CD4-positive, alpha-beta memory T cell (primary cell): ENCODE measurements at regions of chr19 and their contacts with region 1.

Region 1: DNA sequence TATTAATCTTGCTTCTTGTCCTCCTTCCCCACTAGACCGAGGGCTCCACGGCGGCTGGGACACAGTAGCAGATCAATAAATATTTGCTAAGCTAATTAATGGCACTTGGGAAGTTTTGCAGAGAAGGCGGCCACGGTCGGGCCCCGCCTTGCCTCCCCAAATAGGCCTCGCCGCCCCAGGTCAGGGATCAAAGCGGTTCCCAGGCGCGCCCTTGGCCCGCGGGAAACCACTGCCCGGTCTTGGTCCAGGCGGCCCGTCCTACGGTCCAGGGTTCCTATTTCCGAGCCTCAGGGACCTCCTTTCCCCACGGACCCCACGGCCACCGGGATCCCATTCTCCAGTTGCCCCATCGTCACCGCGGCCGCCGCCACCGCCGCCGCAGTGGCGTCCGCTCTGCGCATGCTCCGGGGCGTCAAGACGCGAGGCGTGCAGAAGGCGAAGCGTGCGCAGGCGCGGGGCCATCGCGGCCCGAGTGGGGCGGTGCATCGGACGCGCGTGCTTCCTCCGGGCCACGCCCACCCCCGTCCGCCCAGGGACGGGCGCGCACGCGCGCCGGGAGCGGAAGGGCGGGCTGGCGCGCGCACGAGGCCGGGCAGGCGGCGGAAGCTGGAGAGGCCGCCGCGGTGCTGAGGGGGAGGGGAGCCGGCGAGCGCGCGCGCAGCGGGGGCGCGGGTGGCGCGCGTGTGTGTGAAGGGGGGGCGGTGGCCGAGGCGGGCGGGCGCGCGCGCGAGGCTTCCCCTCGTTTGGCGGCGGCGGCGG is at the start of gene SMARCA4:
- DNase-seq: peak; percentile 96 to 99 (median 99)
- H3K4me3 ChIP-seq: peak within 1 kb of the TSS; percentile 14 to 84
- H3K4me3 Mint-ChIP-seq: peak within 1 kb of the TSS; percentile 89 to 94 (median 92)
- H3K27ac ChIP-seq: peak within 1 kb of the TSS; percentile 79
- H3K27ac Mint-ChIP-seq: peak within 1 kb of the TSS; percentile 91 to 96 (median 93)
- H3K4me1 ChIP-seq: peaks cover 31% of the 10 kb centered on the region
- H3K4me1 Mint-ChIP-seq: peaks cover 21 to 48% (median 35%) of the 10 kb centered on the region in 4 donors
- H3K27me3 ChIP-seq: no peaks in the 10 kb centered on the region
- H3K27me3 Mint-ChIP-seq: no peaks in the 10 kb centered on the region
- total RNA-seq, gene SMARCA4: 94.2 to 118 TPM

Region 2: DNA sequence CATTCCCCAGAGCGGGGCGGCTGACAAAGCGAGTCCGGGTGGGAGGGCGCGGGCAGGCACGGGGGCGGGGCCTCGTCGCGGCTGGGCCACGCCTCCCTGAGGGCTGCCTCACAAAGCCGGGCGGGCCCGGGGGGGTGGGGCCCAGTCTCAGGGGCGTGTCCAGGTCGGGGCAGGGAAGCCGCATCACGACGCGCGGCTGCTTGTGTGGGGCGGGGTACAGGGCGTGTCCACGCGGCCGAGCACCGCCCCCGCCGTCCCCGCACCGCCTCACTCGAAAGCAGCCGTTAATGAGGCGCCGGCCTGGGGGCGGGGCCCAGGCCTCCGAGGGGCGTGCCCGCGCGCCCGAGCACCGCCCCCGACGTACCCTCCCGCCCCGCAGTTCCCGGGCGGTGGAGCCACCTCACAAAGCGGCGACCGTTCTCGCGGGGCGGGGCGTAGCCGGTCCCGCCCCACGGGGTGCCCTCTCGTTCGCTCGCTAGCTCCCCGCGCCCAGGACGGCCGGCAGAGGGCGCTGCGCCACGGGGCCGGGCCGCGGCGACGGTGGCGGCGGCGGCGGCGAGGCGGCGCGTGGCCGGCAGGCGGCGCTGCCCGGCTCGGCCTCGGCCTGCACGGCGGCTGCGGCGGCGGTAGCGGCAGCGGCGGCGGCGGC is 89.4 kb before region 1 on chr19 and contains the start of gene CARM1:
- CTCF ChIA-PET with region 1: no interaction called
- POLR2A ChIA-PET with region 1: no interaction called
- intact Hi-C with region 1: loop called (anchors 1 kb)
- DNase-seq: peak; percentile 99 to 100 (median 99)
- H3K4me3 ChIP-seq: peak within 1 kb of the TSS; percentile 47 to 55
- H3K4me3 Mint-ChIP-seq: peak within 1 kb of the TSS; percentile 81 to 94 (median 86)
- H3K27ac ChIP-seq: peak within 1 kb of the TSS; percentile 55
- H3K27ac Mint-ChIP-seq: peak within 1 kb of the TSS; percentile 76 to 96 (median 92)
- H3K4me1 ChIP-seq: peaks cover 20% of the 10 kb centered on the region
- H3K4me1 Mint-ChIP-seq: peaks cover 8 to 24% (median 16%) of the 10 kb centered on the region in 4 donors
- H3K27me3 ChIP-seq: no peaks in the 10 kb centered on the region
- H3K27me3 Mint-ChIP-seq: no peaks in the 10 kb centered on the region
- total RNA-seq, gene CARM1: 25.2 to 26.5 TPM

Region 3: GRCh38 chr19:10918359-10918758 is 42.1 kb before region 1 on chr19:
- CTCF ChIA-PET with region 1: no interaction called
- POLR2A ChIA-PET with region 1: no interaction called
- intact Hi-C with region 1: no loop called
- DNase-seq: no peak
- H3K4me3 ChIP-seq: no peak overlapping the region
- H3K4me3 Mint-ChIP-seq: no peak overlapping the region
- H3K27ac ChIP-seq: no peak overlapping the region
- H3K27ac Mint-ChIP-seq: peak overlapping the region in 1 of 7 donors; percentile 29
- H3K4me1 ChIP-seq: no peaks in the 10 kb centered on the region
- H3K4me1 Mint-ChIP-seq: no peaks in the 10 kb centered on the region
- H3K27me3 ChIP-seq: no peaks in the 10 kb centered on the region
- H3K27me3 Mint-ChIP-seq: no peaks in the 10 kb centered on the region

Region 4: DNA sequence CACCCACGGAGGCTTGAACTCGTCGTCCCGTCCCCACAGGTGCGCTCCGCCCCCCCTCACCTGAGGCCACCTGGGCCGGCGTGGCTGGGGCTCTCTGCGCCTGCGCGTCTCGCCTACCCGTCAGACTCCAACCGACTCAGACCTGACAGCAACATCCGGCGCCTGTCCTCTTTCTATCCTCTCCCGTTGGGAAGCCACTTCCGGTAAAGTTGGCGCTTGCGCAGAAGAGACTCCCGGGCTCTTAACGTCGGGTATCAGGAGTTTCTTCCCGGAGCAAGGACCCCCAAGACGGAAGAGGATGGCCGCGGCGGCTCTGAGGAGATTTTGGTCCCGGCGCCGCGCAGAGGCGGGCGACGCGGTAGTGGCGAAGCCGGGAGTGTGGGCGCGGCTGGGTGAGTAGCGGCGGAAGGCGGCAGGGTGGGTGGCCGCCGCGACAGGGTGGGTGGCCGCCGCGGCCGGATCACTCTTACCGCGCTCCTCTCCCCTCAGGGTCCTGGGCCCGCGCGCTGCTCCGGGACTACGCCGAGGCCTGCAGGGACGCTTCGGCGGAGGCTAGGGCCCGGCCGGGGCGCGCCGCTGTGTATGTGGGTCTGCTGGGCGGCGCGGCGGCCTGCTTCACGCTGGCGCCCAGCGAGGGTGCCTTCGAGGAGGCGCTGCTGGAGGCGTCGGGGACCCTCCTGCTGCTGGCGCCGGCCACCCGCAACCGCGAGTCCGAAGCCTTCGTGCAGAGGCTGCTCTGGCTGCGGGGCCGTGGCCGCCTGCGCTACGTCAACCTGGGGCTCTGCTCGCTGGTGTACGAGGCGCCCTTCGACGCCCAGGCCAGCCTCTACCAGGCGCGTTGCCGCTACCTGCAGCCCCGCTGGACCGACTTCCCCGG is 31.7 kb before region 1 on chr19 and contains the starts of genes TIMM29 and YIPF2:
- CTCF ChIA-PET with region 1: no interaction called
- POLR2A ChIA-PET with region 1: interaction called, 4 read pairs
- intact Hi-C with region 1: loop called (anchors 5 kb)
- DNase-seq: peak; percentile 89 to 95 (median 90)
- H3K4me3 ChIP-seq: peak within 1 kb of the TSS; percentile 52 to 80
- H3K4me3 Mint-ChIP-seq: peak within 1 kb of the TSS; percentile 88 to 96 (median 90)
- H3K27ac ChIP-seq: peak within 1 kb of the TSS; percentile 57
- H3K27ac Mint-ChIP-seq: peak within 1 kb of the TSS; percentile 88 to 95 (median 90)
- H3K4me1 ChIP-seq: peaks cover 28% of the 10 kb centered on the region
- H3K4me1 Mint-ChIP-seq: peaks cover 8 to 38% (median 19%) of the 10 kb centered on the region in 4 donors
- H3K27me3 ChIP-seq: no peaks in the 10 kb centered on the region
- H3K27me3 Mint-ChIP-seq: no peaks in the 10 kb centered on the region
- total RNA-seq, gene TIMM29: 39.6 to 40.9 TPM
- total RNA-seq, gene YIPF2: 29.6 TPM

Region 5: GRCh38 chr19:11018179-11018578 is 57.7 kb after region 1 on chr19:
- CTCF ChIA-PET with region 1: no interaction called
- POLR2A ChIA-PET with region 1: no interaction called
- intact Hi-C with region 1: no loop called
- DNase-seq: no peak
- H3K4me3 ChIP-seq: no peak overlapping the region
- H3K4me3 Mint-ChIP-seq: no peak overlapping the region
- H3K27ac ChIP-seq: no peak overlapping the region
- H3K27ac Mint-ChIP-seq: no peak overlapping the region
- H3K4me1 ChIP-seq: no peaks in the 10 kb centered on the region
- H3K4me1 Mint-ChIP-seq: no peaks in the 10 kb centered on the region
- H3K27me3 ChIP-seq: no peaks in the 10 kb centered on the region
- H3K27me3 Mint-ChIP-seq: no peaks in the 10 kb centered on the region

Region 6: DNA sequence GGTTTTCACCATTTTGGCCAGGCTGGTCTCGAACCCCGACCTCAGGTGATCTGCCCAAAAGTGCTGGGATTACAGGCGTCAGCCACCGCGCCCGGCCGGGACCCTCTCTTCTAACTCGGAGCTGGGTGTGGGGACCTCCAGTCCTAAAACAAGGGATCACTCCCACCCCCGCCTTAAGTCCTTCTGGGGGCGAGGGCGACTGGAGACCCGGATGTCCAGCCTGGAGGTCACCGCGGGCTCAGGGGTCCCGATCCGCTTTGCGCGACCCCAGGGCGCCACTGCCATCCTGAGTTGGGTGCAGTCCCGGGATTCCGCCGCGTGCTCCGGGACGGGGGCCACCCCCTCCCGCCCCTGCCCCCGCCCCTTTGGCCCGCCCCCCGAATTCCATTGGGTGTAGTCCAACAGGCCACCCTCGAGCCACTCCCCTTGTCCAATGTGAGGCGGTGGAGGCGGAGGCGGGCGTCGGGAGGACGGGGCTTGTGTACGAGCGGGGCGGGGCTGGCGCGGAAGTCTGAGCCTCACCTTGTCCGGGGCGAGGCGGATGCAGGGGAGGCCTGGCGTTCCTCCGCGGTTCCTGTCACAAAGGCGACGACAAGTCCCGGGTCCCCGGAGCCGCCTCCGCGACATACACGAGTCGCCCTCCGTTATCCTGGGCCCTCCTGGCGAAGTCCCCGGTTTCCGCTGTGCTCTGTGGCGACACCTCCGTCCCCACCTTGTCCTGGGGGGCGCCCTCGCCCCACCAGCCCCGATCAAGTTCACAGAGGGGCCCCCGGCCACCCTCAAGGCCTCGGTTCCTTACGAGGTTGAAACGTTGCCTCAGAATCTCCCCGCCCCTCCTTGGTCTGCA is 129.8 kb after region 1 on chr19:
- CTCF ChIA-PET with region 1: no interaction called
- POLR2A ChIA-PET with region 1: interaction called, 10 read pairs
- intact Hi-C with region 1: loop called (anchors 2 kb)
- DNase-seq: peak; percentile 94 to 98 (median 97)
- H3K4me3 ChIP-seq: peak overlapping the region; percentile 43 to 64
- H3K4me3 Mint-ChIP-seq: peak overlapping the region; percentile 81 to 93 (median 88)
- H3K27ac ChIP-seq: peak overlapping the region; percentile 98
- H3K27ac Mint-ChIP-seq: peak overlapping the region; percentile 93 to 100 (median 99)
- H3K4me1 ChIP-seq: peaks cover 61% of the 10 kb centered on the region
- H3K4me1 Mint-ChIP-seq: peaks cover 26 to 59% (median 43%) of the 10 kb centered on the region in 4 donors
- H3K27me3 ChIP-seq: no peaks in the 10 kb centered on the region
- H3K27me3 Mint-ChIP-seq: no peaks in the 10 kb centered on the region

Region 7: GRCh38 chr19:11096210-11096841 is 135.8 kb after region 1 on chr19:
- CTCF ChIA-PET with region 1: no interaction called
- POLR2A ChIA-PET with region 1: interaction called, 10 read pairs
- intact Hi-C with region 1: loop called (anchors 2 kb)
- DNase-seq: peak; percentile 31 to 71 (median 38)
- H3K4me3 ChIP-seq: peak overlapping the region in 1 of 2 donors; percentile 32
- H3K4me3 Mint-ChIP-seq: peak overlapping the region; percentile 46 to 91 (median 76)
- H3K27ac ChIP-seq: peak overlapping the region; percentile 89
- H3K27ac Mint-ChIP-seq: peak overlapping the region; percentile 92 to 100 (median 97)
- H3K4me1 ChIP-seq: peaks cover 65% of the 10 kb centered on the region
- H3K4me1 Mint-ChIP-seq: peaks cover 31 to 62% (median 45%) of the 10 kb centered on the region in 4 donors
- H3K27me3 ChIP-seq: no peaks in the 10 kb centered on the region
- H3K27me3 Mint-ChIP-seq: no peaks in the 10 kb centered on the region